ENCODE measurements at regions of chr5 and their contacts with region 1.

Region 1: GRCh38 chr5:32174011-32174870 is at the start of gene GOLPH3:
- DNase-seq: peak; percentile 87 to 89 (median 88)
- H3K4me3 ChIP-seq: peak within 1 kb of the TSS; percentile 65 to 95 (median 70)
- H3K4me3 Mint-ChIP-seq: peak within 1 kb of the TSS; percentile 98 to 100
- H3K27ac ChIP-seq: peak within 1 kb of the TSS; percentile 77 to 98
- H3K27ac Mint-ChIP-seq: peak within 1 kb of the TSS; percentile 95 to 99 (median 97)
- H3K4me1 ChIP-seq: peaks cover 35 to 43% of the 10 kb centered on the region in 2 donors
- H3K4me1 Mint-ChIP-seq: peaks cover 40% of the 10 kb centered on the region
- H3K27me3 ChIP-seq: no peaks in the 10 kb centered on the region
- H3K27me3 Mint-ChIP-seq: peaks cover 0 to 3% (median 2%) of the 10 kb centered on the region in 3 donors
- CTCF ChIP-seq: no peak
- polyA plus RNA-seq, gene GOLPH3: 25.1 to 108 (median 105) TPM

Region 2: DNA sequence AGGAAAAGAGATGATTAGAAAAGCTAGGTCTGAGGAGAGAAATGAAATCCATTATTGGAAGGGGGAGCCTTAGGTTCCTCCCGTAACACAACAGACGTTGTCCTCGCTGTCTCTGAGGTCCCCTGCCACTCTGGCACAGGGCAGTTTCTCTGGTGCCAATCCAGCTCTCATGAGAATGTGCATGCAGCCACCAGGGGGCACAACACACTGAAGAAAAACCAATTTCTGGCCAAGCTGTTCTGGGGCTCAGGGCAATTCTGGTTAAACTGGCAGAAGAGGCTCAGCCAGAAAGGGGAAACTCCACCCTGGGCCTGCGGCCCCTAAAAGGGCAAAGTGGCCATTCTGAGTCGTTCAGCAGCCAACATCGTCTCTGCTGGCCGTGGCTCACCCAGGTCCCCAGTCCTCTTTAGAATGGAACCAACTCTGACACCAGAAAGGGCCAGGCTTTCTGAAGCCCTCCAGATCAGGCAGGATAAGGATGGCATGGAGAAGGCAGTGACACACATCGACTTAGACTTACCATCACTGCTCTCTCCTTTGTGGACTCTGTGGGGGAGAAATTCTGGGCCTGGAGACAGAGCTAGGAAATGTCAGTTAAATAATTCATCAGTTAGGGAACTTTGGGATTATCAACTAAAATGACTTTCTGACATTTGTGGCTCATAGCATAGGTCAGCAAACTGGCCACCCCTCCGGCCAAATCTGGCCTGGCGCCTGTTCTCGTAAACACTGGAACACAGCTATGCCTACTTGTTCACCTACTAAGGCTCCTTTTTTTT is 58.4 kb after region 1 on chr5:
- intact Hi-C with region 1: loop called (anchors 5 to 10 kb)
- DNase-seq: peak; percentile 81 to 85 (median 83)
- H3K4me3 ChIP-seq: peak overlapping the region in 1 of 3 experiments; percentile 41
- H3K4me3 Mint-ChIP-seq: peak overlapping the region; percentile 34 to 73
- H3K27ac ChIP-seq: peak overlapping the region; percentile 56 to 76
- H3K27ac Mint-ChIP-seq: peak overlapping the region; percentile 79 to 94 (median 91)
- H3K4me1 ChIP-seq: peaks cover 49 to 50% of the 10 kb centered on the region in 2 donors
- H3K4me1 Mint-ChIP-seq: peaks cover 54% of the 10 kb centered on the region
- H3K27me3 ChIP-seq: no peaks in the 10 kb centered on the region
- H3K27me3 Mint-ChIP-seq: no peaks in the 10 kb centered on the region
- CTCF ChIP-seq: peak; percentile 89

Region 3: DNA sequence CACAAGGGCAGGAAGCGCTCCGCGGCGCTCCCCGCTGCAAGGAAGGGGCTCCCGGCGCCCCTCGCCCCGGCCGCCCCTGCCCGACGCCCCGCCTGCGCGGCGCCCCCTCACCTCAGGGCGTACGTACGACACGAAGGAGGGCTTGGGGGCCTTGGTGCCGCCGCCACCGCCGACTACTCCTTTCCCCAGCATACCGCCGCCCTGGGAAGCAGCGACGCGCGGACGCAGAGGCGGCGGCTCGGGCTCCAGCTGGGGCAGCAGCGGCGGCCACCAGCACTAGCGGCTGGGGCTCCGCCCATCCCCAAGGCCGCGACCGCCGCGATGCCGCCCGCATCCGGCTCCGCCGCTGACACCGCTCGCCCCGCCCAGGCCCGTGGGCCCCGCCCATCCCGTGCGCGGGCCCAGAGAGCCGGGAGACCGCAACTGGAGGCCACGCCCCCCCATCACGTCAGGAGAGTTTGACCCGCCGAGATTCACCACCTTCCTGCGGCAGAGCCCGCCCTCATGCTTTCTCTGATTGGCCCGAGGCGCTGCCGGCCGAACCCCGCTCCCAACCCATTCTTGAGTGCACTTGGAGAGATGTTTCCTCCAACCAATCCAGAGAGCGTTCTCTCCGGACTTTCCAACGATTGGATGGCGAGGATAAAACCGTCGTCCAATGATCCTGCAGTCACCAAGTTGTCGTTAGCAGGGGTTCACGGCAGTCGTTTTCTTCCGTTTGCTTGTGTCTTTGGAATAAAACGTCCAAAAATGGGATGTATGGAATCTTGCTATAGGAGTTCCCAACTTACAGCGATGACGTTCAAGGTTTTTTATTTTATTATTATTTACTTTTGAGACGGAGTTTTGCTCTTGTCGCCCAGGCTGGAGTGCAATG is 138.6 kb after region 1 on chr5 and contains the start of gene MTMR12:
- intact Hi-C with region 1: loop called (anchors 5 to 10 kb)
- DNase-seq: peak; percentile 99
- H3K4me3 ChIP-seq: peak within 1 kb of the TSS; percentile 57 to 88 (median 82)
- H3K4me3 Mint-ChIP-seq: peak within 1 kb of the TSS; percentile 92 to 97
- H3K27ac ChIP-seq: peak within 1 kb of the TSS; percentile 48 to 86
- H3K27ac Mint-ChIP-seq: peak within 1 kb of the TSS; percentile 83 to 94 (median 87)
- H3K4me1 ChIP-seq: peaks cover 37 to 44% of the 10 kb centered on the region in 2 donors
- H3K4me1 Mint-ChIP-seq: peaks cover 40% of the 10 kb centered on the region
- H3K27me3 ChIP-seq: no peaks in the 10 kb centered on the region
- H3K27me3 Mint-ChIP-seq: peaks cover 1 to 5% (median 2%) of the 10 kb centered on the region in 3 donors
- CTCF ChIP-seq: no peak
- polyA plus RNA-seq, gene MTMR12: 10.3 to 19.0 (median 17.3) TPM

Region 4: DNA sequence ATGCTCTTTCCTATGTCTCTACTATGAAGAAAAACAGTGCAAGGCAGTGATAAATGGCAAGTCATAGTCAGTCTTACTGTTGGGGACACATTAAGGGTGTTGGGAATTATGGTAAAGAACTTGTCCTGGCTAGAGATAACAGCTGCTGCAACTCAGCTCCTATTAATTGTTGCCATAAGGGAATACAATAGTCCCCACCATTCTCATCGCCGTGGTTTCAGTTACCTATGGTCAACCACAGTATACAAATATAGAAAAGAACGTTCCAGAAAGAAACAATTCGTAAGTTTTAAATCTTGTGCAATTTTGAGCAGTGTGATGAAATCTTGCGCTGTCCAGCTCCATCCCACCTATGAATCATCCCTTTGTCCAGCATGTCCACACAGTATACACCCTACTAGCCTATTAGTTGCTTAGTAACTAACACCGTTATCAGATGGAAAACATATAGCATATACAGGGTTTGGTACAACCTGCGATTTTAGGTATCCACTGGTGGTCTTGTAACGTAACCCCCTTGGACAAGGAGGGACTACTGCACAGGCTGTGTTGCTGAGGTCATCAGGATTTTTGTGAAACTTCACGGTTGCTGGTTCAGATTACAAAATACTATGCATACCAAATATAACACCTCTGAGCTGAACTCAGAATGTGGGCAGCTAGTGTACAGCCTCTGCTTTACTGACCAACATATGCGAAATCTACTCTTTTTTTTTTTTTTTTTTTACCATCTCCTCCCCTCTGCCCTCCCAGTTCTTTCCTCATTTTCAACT is 216.8 kb after region 1 on chr5:
- intact Hi-C with region 1: loop called in 1 of 2 experiments (anchors 10 kb)
- DNase-seq: peak; percentile 80 to 92 (median 90)
- H3K4me3 ChIP-seq: no peak overlapping the region
- H3K4me3 Mint-ChIP-seq: peak overlapping the region in 1 of 2 donors; percentile 35
- H3K27ac ChIP-seq: peak overlapping the region; percentile 52 to 85
- H3K27ac Mint-ChIP-seq: peak overlapping the region; percentile 78 to 98 (median 98)
- H3K4me1 ChIP-seq: peaks cover 41 to 49% of the 10 kb centered on the region in 2 donors
- H3K4me1 Mint-ChIP-seq: peaks cover 39% of the 10 kb centered on the region
- H3K27me3 ChIP-seq: no peaks in the 10 kb centered on the region
- H3K27me3 Mint-ChIP-seq: no peaks in the 10 kb centered on the region
- CTCF ChIP-seq: no peak

Region 5: GRCh38 chr5:32444431-32445286 is 270.4 kb after region 1 on chr5 and contains the start of gene ZFR:
- intact Hi-C with region 1: loop called in 1 of 2 experiments (anchors 10 kb)
- DNase-seq: peak; percentile 90 to 93 (median 90)
- H3K4me3 ChIP-seq: peak within 1 kb of the TSS; percentile 65 to 90 (median 76)
- H3K4me3 Mint-ChIP-seq: peak within 1 kb of the TSS; percentile 84 to 93
- H3K27ac ChIP-seq: peak within 1 kb of the TSS; percentile 64 to 89
- H3K27ac Mint-ChIP-seq: peak within 1 kb of the TSS; percentile 87 to 95 (median 92)
- H3K4me1 ChIP-seq: peaks cover 39 to 47% of the 10 kb centered on the region in 2 donors
- H3K4me1 Mint-ChIP-seq: peaks cover 39% of the 10 kb centered on the region
- H3K27me3 ChIP-seq: no peaks in the 10 kb centered on the region
- H3K27me3 Mint-ChIP-seq: peaks cover 2 to 4% (median 2%) of the 10 kb centered on the region in 3 donors
- CTCF ChIP-seq: no peak
- polyA plus RNA-seq, gene ZFR: 29.8 to 81.8 (median 62.3) TPM

Region 6: GRCh38 chr5:32760091-32760509 is 585.9 kb after region 1 on chr5:
- intact Hi-C with region 1: no loop called
- DNase-seq: peak in 1 of 3 donors; percentile 4
- H3K4me3 ChIP-seq: peak overlapping the region; percentile 40 to 73 (median 68)
- H3K4me3 Mint-ChIP-seq: peak overlapping the region; percentile 79 to 94
- H3K27ac ChIP-seq: no peak overlapping the region
- H3K27ac Mint-ChIP-seq: peak overlapping the region in 1 of 7 donors; percentile 75
- H3K4me1 ChIP-seq: peaks cover 0 to 2% of the 10 kb centered on the region in 2 donors
- H3K4me1 Mint-ChIP-seq: peaks cover 6% of the 10 kb centered on the region
- H3K27me3 ChIP-seq: no peaks in the 10 kb centered on the region
- H3K27me3 Mint-ChIP-seq: peaks cover 0 to 7% (median 2%) of the 10 kb centered on the region in 3 donors
- CTCF ChIP-seq: no peak